K562 (cell line): ENCODE measurements at regions of chr4 and their contacts with region 1.

Region 1: GRCh38 chr4:87848622-87849351 is 16.0 kb downstream of the MEPE start:
- DNase-seq: peak; percentile 37 to 59 (median 42)
- ATAC-seq: peak; percentile 97
- H3K4me3 ChIP-seq: no peak overlapping the region
- H3K27ac ChIP-seq: no peak overlapping the region
- H3K4me1 ChIP-seq: peaks cover 0 to 7% of the 10 kb centered on the region in 2 experiments; a peak in 1 of 5 replicates
- H3K27me3 ChIP-seq: 0 out of 5 replicates have a peak, but pooled peaks cover 0 to 3% of the 10 kb centered on the region in 2 experiments
- CTCF ChIP-seq: peak; percentile 60 to 64 (median 63); a peak in 5 of 6 replicates
- EP300 ChIP-seq: no peak
- POLR2A ChIP-seq: no peak
- RAD21 ChIP-seq: peak; percentile 26 to 45

Region 2: DNA sequence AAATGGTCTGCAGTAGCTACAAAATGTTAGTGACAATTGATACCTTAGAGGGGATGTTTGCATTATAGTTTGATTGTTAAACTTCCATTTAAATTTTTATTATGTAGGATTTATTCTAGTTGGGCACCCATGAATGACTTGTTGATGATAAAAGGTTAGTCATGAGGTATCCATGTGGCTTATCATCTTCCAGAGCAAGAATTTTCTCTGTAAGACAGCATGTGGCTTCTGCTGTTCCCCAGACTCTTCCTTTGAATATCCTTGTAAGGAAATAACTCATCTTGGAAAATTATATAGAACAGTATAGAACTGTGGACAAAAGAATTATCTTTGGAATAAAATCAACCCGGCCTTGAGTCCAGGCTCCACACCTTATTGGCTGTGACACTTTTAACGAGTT is 588.3 kb before region 1 on chr4:
- CTCF ChIA-PET with region 1: no interaction called
- POLR2A ChIA-PET with region 1: no interaction called
- in situ Hi-C with region 1: loop called (anchors 10 kb)
- intact Hi-C with region 1: no loop called
- DNase-seq: no peak
- ATAC-seq: no peak
- H3K4me3 ChIP-seq: no peak overlapping the region
- H3K27ac ChIP-seq: no peak overlapping the region
- H3K4me1 ChIP-seq: no peaks in the 10 kb centered on the region
- H3K27me3 ChIP-seq: no peaks in the 10 kb centered on the region
- CTCF ChIP-seq: no peak
- EP300 ChIP-seq: no peak
- POLR2A ChIP-seq: no peak
- RAD21 ChIP-seq: no peak

Region 3: GRCh38 chr4:87498446-87498900 is 350.3 kb before region 1 on chr4:
- CTCF ChIA-PET with region 1: no interaction called
- POLR2A ChIA-PET with region 1: no interaction called
- in situ Hi-C with region 1: no loop called
- intact Hi-C with region 1: loop called (anchors 5 kb)
- DNase-seq: no peak
- ATAC-seq: no peak
- H3K4me3 ChIP-seq: no peak overlapping the region
- H3K27ac ChIP-seq: no peak overlapping the region
- H3K4me1 ChIP-seq: no peaks in the 10 kb centered on the region
- H3K27me3 ChIP-seq: no peaks in the 10 kb centered on the region; a peak in 1 of 5 replicates
- CTCF ChIP-seq: no peak
- EP300 ChIP-seq: no peak
- POLR2A ChIP-seq: no peak
- RAD21 ChIP-seq: no peak

Region 4: DNA sequence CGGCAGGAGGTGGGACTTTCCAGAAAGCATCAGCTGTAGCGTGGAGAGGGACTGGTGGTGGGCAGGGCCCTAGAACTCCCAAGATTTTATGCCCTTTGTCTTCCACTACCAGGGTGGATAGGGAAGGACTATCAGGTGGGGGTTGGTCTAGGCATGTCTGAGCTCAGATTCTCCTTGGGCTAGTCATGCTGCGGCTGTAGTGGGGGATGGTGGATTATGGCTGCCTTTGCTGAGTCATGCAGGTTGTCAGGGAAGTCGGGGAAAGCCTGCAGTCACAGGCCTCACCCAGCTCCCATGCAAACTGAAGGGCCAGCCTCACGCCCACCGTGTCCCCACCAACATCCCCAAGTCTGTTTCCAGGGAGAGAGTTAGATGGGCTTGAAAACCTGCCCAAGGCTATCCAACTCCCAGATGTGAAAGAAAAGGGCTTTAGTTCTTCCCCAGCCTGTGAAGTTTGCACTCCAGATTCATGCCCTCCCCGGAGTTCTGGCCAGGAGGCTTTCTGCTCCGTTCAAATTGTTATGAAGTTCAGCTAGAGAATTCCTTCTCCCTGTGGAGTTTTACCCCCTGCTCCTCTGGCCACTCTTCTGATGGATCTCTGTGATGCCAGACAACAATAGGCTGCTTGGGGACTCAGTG is 29.4 kb before region 1 on chr4:
- CTCF ChIA-PET with region 1: no interaction called
- POLR2A ChIA-PET with region 1: no interaction called
- in situ Hi-C with region 1: no loop called
- intact Hi-C with region 1: no loop called
- DNase-seq: peak; percentile 10 to 54 (median 24)
- ATAC-seq: peak; percentile 92
- H3K4me3 ChIP-seq: no peak overlapping the region
- H3K27ac ChIP-seq: peak overlapping the region; percentile 62; the same call in 2 of the 3 replicates
- H3K4me1 ChIP-seq: peaks cover 0 to 14% of the 10 kb centered on the region in 2 experiments; a peak in 4 of 5 replicates
- H3K27me3 ChIP-seq: no peaks in the 10 kb centered on the region
- CTCF ChIP-seq: no peak
- EP300 ChIP-seq: no peak
- POLR2A ChIP-seq: no peak
- RAD21 ChIP-seq: no peak

Region 5: DNA sequence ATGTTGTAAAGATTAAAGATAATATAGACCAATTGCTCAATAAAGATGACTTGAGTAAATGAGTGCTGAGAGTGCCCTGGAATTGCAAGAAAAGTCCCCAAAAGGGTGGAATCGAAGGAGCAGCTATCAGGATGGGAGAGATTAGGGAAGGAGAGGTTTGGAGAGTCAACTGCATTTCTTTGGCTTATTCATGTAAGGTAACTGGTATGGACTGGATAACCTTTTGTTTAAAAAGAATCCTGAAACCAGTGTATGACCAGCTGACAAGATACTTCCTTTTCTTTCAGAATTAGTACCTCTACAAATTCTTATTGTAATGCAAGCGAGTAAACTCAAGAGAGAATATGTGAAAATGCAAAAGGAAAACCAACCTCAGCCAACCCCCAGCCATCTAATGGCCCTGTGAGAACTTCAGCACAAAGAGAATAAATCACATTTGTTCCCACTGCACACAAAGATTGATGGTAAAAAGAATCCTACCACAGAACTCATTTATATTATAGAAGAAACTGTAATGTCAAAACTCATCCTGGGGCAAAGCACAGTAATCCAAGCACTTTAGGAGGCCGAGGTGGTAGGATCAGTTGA is 102.2 kb after region 1 on chr4:
- CTCF ChIA-PET with region 1: no interaction called
- POLR2A ChIA-PET with region 1: interaction called, 10 read pairs
- in situ Hi-C with region 1: no loop called
- intact Hi-C with region 1: no loop called
- DNase-seq: no peak
- ATAC-seq: no peak
- H3K4me3 ChIP-seq: no peak overlapping the region
- H3K27ac ChIP-seq: no peak overlapping the region
- H3K4me1 ChIP-seq: no peaks in the 10 kb centered on the region
- H3K27me3 ChIP-seq: peaks cover 3 to 5% of the 10 kb centered on the region in 2 experiments; a peak in 2 of 5 replicates
- CTCF ChIP-seq: no peak
- EP300 ChIP-seq: no peak
- POLR2A ChIP-seq: no peak
- RAD21 ChIP-seq: no peak

Region 6: DNA sequence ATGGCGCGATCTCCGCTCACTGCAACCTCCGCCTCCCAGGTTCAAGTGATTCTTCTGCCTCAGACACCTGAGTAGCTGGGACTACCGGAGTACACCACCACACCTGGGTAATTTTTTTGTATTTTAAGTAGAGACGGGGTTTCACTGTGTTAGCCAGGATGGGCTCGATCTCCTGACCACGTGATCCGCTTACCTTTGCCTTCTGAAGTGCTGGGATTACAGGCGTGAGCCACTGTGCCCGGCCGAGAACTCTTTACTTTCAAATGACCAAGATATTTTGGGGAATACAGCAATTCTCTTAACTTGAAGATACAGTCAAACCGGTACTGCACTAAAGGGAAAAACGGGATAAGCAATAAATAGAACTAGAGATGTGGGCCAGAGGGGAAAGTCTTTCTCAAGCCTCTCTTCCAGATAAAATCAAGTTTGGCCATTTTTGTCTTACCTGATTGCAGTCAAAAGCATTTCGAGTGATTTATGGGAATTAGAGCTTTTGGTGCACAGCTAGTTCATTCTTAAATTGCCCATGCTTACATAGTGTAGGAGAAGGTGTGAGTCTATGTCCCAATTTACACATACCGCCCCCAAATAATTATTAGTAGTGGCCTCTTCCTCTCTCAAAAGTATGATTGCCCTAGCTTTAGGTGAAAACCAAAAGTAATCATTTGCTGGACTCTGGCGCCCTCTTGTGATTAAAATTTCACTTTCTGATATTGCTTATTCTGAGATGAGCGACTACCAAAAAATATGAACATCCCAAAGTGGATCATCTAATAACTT is 362.9 kb after region 1 on chr4:
- CTCF ChIA-PET with region 1: interaction called, 10 read pairs
- POLR2A ChIA-PET with region 1: no interaction called
- in situ Hi-C with region 1: no loop called
- intact Hi-C with region 1: loop called (anchors 1 kb)
- DNase-seq: peak; percentile 33 to 62 (median 45)
- ATAC-seq: peak; percentile 85
- H3K4me3 ChIP-seq: no peak overlapping the region
- H3K27ac ChIP-seq: no peak overlapping the region
- H3K4me1 ChIP-seq: no peaks in the 10 kb centered on the region; a peak in 1 of 5 replicates
- H3K27me3 ChIP-seq: peaks cover 4 to 15% of the 10 kb centered on the region in 2 experiments; a peak in 2 of 5 replicates
- CTCF ChIP-seq: peak; percentile 56 to 84 (median 62); a peak in 5 of 6 replicates
- EP300 ChIP-seq: no peak
- POLR2A ChIP-seq: no peak
- RAD21 ChIP-seq: peak; percentile 87 to 89